Right ventricle myocardium inferior (tissue), 1 donor: ENCODE measurements at regions of chr11 and their contacts with region 1.

Region 1: GRCh38 chr11:59802639-59803176 is 7.9 kb downstream of the MRPL16 start:
- DNase-seq: no peak
- ATAC-seq: peak; percentile 87

Region 2: GRCh38 chr11:59542142-59542810 is 260.4 kb before region 1 on chr11:
- intact Hi-C with region 1: loop called (anchors 2 kb)
- DNase-seq: no peak
- ATAC-seq: no peak

Region 3: DNA sequence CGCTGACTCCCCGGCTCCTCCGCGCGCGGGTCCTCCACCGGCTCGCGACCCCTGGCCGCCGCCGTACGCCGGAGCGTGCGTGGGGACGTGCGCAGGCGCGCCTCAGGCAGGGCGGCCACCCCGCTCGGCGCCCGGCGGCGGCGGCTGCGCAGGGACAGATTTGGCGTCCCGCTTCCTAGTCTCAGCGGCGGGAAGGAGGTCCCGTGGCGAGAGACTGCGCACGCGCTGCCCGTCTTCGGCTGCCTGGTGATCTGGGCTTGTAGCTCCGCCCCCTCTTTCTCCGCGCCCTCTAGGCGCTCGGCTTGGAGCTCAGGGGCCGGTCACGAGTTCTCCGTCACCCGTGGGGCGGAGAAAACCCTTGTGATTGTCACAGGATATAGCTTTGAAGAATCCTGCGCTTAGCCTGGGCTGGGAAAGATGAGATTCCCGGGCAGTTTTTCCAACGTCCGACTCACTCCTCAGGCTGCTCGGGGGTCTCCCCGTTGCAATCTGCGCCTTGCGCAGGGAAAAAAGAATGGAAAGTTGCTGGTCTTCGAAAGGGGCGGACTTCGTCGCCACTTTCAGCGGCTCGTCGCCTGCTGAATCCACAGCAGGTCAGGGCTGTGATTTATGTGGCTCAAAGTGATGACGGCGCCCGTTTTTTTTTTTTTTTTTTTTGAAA is 133.6 kb before region 1 on chr11 and contains the start of gene PATL1:
- intact Hi-C with region 1: loop called (anchors 2 kb)
- DNase-seq: peak; percentile 100
- ATAC-seq: peak; percentile 98
- total RNA-seq, gene PATL1: 22.3 TPM

Region 4: DNA sequence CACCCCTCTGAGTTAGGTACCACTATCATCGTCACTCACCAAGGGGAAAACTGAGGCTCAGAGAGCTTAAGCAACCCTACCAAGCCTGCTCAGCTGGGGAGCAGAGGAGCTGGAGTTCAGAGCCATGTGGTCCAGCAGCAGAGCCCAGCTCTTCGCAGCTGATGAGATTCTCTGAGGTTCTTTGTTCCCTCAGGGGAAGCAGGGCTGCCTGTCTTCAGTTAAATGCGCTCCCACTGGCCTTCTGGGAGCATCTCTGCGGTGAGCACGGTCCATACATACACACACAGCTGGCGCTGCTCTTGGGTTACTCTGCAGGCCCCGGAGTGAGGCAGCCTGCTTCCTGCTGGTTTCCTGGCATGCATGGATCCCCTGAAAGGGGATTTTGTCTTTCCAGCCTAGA is 1058.2 kb after region 1 on chr11:
- intact Hi-C with region 1: no loop called
- DNase-seq: no peak
- ATAC-seq: no peak